Vagina (tissue), 2 donors: ENCODE measurements at regions of chr12 and their contacts with region 1.

Region 1: DNA sequence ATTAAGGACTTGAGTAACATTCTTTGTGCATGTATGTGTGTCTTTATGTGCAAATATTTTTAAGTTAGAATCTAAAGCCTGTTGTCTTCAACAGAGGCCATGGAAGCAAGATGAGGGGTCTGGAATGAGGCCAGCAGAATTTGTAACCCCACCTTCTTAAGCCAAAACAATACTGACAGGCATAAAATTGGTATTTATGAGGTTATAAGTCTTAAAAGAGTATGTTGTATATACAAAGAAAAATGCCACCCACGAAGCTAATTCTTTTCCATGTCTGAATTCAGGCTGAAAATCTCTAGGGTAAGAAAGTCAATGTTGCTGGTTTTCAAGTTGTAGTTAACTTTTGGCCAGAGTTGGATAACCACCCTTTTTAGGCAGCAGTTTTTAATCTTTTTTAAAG is 86.2 kb upstream of the TMTC1 start:
- DNase-seq: no peak
- H3K4me3 ChIP-seq: no peak overlapping the region
- H3K27ac ChIP-seq: no peak overlapping the region
- H3K4me1 ChIP-seq: no peaks in the 10 kb centered on the region
- H3K27me3 ChIP-seq: no peaks in the 10 kb centered on the region
- CTCF ChIP-seq: no peak
- POLR2A ChIP-seq: no peak

Region 2: DNA sequence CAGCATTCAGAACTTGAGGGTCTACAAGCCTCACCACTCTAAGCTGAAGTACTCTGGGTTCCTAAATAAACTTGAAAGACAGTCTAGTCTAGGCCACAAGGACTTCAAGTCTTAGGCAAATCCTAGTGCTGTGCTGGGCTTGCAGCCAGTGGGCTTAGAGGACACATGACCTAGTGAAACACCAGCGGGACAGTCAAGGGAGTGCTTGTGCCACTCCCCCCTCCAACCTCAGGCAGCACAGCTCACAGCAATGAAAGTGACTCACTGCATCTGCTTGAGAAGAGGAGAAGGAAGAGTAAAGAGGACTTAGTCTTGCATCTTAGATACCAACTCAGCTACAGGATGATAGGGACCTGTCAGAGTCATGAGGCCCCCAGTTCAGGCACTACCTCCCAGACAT is 387.7 kb after region 1 on chr12:
- intact Hi-C with region 1: loop called (anchors 10 kb)
- DNase-seq: no peak
- H3K4me3 ChIP-seq: no peak overlapping the region
- H3K27ac ChIP-seq: no peak overlapping the region
- H3K4me1 ChIP-seq: no peaks in the 10 kb centered on the region
- H3K27me3 ChIP-seq: no peaks in the 10 kb centered on the region
- CTCF ChIP-seq: no peak
- POLR2A ChIP-seq: no peak